Activated CD8-positive, alpha-beta T cell treated with anti-CD3 and anti-CD28 coated beads, Interleukin-2, amount 10 ng/mL, durations not matched to agents 7 days and 5 days (primary cell): ENCODE measurements at regions of chr6 and their contacts with region 1.

Region 1: GRCh38 chr6:109491207-109491938 is 8.4 kb upstream of the ZBTB24 start:
- DNase-seq: peak; percentile 66
- ATAC-seq: peak; percentile 97
- H3K4me3 Mint-ChIP-seq: peak overlapping the region; percentile 56
- H3K27ac Mint-ChIP-seq: peak overlapping the region; percentile 94
- H3K4me1 Mint-ChIP-seq: peaks cover 32% of the 10 kb centered on the region
- H3K27me3 Mint-ChIP-seq: peaks cover 9% of the 10 kb centered on the region

Region 2: DNA sequence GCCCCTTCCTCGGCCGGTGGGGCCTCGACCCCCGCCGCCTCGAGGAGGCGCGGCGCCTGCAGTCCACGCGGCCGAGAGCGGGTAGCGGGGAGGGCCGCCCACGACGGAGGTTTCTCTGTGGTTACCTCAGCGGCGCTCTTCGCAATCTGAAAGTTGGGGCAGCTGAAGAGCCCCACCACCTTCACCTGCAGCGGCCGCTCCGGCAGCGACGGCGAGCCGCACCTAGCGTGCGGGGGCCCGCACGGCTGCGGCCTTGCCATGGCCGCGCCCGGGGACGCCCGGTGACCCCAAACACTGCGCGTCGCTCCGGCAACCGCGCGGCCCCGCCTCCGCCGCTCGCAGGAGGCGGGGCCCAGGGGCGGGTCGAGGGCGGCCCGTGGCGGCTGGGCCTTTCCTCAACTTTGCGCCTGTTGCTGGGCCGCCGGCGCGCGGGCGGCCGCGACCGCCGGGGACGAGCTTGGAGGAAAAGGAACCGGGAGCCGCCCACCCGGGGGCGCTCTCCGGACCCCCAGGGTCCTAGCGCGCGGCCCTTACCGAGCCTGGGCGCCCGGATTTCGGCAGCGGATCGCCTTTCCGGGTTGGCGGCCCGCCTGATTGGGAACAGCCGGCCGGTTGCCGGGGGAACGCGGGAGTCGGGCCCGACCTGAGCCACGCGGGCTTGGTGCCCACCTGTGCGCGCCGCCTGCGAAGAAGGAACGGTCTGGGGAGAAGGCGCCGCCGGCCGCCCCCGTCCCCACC is 50.9 kb before region 1 on chr6 and contains the starts of genes PPIL6 and SMPD2:
- CTCF ChIA-PET with region 1: no interaction called
- POLR2A ChIA-PET with region 1: interaction called, 13 read pairs
- DNase-seq: peak; percentile 82
- ATAC-seq: peak; percentile 88
- H3K4me3 Mint-ChIP-seq: peak within 1 kb of the TSS; percentile 90
- H3K27ac Mint-ChIP-seq: peak within 1 kb of the TSS; percentile 82
- H3K4me1 Mint-ChIP-seq: peaks cover 29% of the 10 kb centered on the region
- H3K27me3 Mint-ChIP-seq: no peaks in the 10 kb centered on the region
- total RNA-seq, gene PPIL6: 0.16 TPM in 1 of 2 experiments, not detected in the other
- total RNA-seq, gene SMPD2: 15.5 to 15.6 TPM

Region 3: GRCh38 chr6:109508166-109508860 is 16.9 kb after region 1 on chr6:
- CTCF ChIA-PET with region 1: interaction called, 11 read pairs
- POLR2A ChIA-PET with region 1: interaction called, 6 read pairs
- DNase-seq: no peak
- ATAC-seq: no peak
- H3K4me3 Mint-ChIP-seq: no peak overlapping the region
- H3K27ac Mint-ChIP-seq: no peak overlapping the region
- H3K4me1 Mint-ChIP-seq: no peaks in the 10 kb centered on the region
- H3K27me3 Mint-ChIP-seq: peaks cover 10% of the 10 kb centered on the region

Region 4: DNA sequence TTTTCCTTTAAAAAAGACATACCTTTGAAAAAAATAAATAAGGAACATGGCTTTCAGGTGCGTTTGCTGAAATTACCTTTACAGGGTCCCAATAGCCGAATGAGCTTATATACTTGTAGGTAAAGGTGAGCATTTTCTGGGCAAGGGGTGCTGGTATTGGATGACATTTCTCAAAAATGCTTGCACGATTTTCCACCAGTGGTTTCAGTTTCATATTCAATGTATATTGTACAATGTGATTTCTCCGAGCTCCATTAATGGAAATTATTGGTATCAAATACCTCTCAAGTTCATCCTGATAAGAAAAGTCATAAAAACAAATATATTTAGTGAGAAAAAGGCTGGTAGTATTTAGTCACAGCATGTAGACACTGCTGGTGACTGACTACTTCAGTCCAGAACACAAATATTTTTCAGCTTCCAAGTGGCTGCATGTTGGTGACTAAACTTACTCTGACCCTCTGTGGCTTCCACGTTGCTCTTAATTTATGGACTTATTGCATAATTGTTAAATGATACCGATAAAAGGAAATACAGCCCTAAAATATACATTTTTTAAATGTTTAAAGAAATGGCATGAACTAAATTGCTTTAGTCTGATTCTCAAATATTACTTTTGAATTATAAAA is 24.5 kb after region 1 on chr6:
- CTCF ChIA-PET with region 1: interaction called, 20 read pairs
- POLR2A ChIA-PET with region 1: interaction called, 16 read pairs
- DNase-seq: peak; percentile 39
- ATAC-seq: peak; percentile 70
- H3K4me3 Mint-ChIP-seq: peak overlapping the region; percentile 45
- H3K27ac Mint-ChIP-seq: peak overlapping the region; percentile 78
- H3K4me1 Mint-ChIP-seq: peaks cover 36% of the 10 kb centered on the region
- H3K27me3 Mint-ChIP-seq: no peaks in the 10 kb centered on the region